H1 (cell line): ENCODE measurements at regions of chr5 and their contacts with region 1.

Region 1: DNA sequence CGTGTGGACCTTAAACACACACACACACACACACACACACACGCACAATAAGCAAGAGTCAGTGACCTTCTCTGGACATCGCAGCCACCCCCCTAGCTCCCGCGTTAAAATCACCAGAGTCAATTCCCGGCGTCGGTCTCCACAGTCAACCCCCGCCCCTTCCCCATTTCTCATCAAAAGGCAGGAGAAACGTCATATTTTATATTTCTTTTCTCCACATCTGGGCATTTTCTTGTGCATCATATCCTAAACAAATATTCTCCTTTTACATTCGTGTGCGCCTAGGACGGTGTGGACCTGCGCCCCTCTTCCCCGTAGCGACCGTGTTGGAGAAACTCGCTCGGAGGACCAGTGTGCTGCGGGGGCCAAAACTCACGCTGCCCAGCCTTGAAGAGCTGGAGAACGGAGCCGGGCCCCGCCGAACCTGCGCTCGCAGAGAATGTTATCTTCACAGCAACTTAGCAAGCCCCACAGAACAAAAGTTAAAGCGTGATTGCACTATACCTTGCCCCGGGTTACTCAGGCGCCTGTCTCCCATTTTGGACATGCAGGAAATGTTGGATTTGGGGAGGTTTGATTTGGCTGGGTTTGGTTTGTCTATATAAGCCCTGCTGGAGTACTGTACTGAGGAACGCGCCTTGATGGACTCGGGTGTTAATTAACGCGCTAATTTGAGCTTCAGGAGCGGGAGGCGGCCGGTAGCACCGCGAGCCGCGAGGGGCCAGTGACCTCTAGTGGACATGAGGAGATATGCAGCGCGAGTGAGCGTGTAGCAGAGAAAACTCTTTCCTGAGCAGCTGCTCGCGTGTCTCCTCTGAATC is 192.4 kb downstream of the MEF2C start:
- DNase-seq: peak in 1 of 2 experiments; percentile 85
- H3K4me3 ChIP-seq: peak overlapping the region in 3 of 4 experiments; percentile 5 to 54 (median 7); a peak in 4 of 8 replicates
- H3K27ac ChIP-seq: no peak overlapping the region
- H3K4me1 ChIP-seq: peaks cover 30 to 36% (median 34%) of the 10 kb centered on the region in 4 experiments
- H3K27me3 ChIP-seq: peaks cover 91 to 100% (median 98%) of the 10 kb centered on the region in 4 experiments
- CTCF ChIP-seq: peak; percentile 79 to 95 (median 95)
- EP300 ChIP-seq: no peak
- POLR2A ChIP-seq: no peak
- RAD21 ChIP-seq: peak; percentile 95

Region 2: GRCh38 chr5:87780831-87781760 is 909.5 kb before region 1 on chr5:
- CTCF ChIA-PET with region 1: interaction called, 50 read pairs
- POLR2A ChIA-PET with region 1: no interaction called
- DNase-seq: peak; percentile 57 to 77
- H3K4me3 ChIP-seq: peak overlapping the region in 1 of 4 experiments; percentile 47; a peak in 3 of 8 replicates
- H3K27ac ChIP-seq: no peak overlapping the region
- H3K4me1 ChIP-seq: no peaks in the 10 kb centered on the region; a peak in 1 of 7 replicates
- H3K27me3 ChIP-seq: peaks cover 2 to 9% (median 4%) of the 10 kb centered on the region in 4 experiments; a peak in 4 of 7 replicates
- CTCF ChIP-seq: peak; percentile 74 to 88 (median 86)
- EP300 ChIP-seq: no peak
- POLR2A ChIP-seq: no peak
- RAD21 ChIP-seq: peak; percentile 99

Region 3: DNA sequence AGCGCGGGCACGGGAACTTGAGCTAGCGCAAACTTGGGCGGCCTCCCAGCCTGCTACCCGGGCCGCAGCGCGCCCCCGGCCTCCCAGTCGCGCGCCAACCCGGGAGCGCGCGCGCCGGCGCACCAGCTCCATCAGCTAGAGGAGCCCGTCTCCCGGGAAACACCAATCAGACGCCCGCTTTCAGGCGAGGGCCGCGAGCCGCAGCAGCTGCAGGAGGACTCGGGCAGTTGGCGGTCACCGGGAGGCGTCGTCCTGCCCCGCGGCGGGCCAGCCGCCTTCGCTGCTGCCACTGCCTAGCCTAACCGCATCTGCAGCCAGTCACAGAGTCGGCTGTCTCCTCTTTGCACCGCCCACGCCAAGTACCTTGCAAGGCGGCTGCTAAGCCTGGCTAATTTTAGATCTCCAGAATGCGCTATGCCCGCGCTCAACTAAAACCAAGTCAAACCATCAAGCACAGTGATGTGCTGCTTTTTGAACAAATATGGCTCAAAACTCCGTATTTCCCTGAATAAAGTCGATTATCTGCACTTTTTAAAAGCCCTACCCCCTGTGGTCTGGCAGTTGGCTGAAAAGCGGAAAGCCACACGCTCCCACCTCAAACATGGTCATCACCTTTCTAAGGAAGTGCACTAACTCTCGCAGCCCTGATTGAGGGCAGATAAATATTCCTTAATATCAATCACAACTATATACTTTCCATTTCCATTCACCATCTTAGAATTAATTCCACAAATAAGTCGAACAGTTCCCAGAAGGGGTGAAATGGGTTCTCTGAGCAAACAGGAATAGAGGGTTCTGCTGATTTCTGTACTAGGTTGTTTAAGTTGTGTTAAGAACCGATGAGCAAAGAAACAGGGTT is 29.4 kb before region 1 on chr5:
- CTCF ChIA-PET with region 1: interaction called, 24 read pairs
- POLR2A ChIA-PET with region 1: interaction called, 7 read pairs
- DNase-seq: peak in 1 of 2 experiments; percentile 92
- H3K4me3 ChIP-seq: peak overlapping the region; percentile 29 to 60 (median 34); a peak in 7 of 8 replicates
- H3K27ac ChIP-seq: no peak overlapping the region
- H3K4me1 ChIP-seq: peaks cover 10 to 26% (median 13%) of the 10 kb centered on the region in 4 experiments; a peak in 6 of 7 replicates
- H3K27me3 ChIP-seq: peaks cover 25 to 80% (median 47%) of the 10 kb centered on the region in 4 experiments
- CTCF ChIP-seq: no peak
- EP300 ChIP-seq: no peak
- POLR2A ChIP-seq: no peak
- RAD21 ChIP-seq: no peak; a peak in 2 of 4 replicates

Region 4: GRCh38 chr5:88673253-88674105 is 17.1 kb before region 1 on chr5:
- CTCF ChIA-PET with region 1: interaction called, 63 read pairs
- POLR2A ChIA-PET with region 1: interaction called, 5 read pairs
- DNase-seq: no peak
- H3K4me3 ChIP-seq: peak overlapping the region; percentile 6 to 64 (median 20); a peak in 4 of 8 replicates
- H3K27ac ChIP-seq: no peak overlapping the region
- H3K4me1 ChIP-seq: peaks cover 10 to 32% (median 19%) of the 10 kb centered on the region in 4 experiments
- H3K27me3 ChIP-seq: peaks cover 51 to 87% (median 68%) of the 10 kb centered on the region in 4 experiments
- CTCF ChIP-seq: no peak
- EP300 ChIP-seq: no peak
- POLR2A ChIP-seq: no peak
- RAD21 ChIP-seq: no peak

Region 5: DNA sequence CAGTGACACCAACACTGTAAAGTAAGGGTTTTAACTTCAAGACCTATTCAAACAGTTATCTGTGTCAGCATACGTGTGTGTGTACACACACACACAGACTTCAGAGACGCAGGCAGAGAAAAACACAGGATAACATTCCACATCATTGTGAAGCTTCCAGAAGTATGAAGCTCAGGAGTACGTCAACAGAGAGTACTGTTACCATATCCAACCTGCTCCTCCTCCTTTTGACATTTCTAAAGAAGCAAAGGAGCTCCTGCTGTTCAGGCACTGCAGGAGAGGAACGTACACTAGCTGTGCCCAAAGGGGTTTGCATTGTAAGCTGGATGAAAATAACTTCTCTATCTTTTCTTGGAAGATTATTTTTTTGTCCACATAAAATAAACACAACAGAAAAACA is 11.7 kb after region 1 on chr5:
- CTCF ChIA-PET with region 1: interaction called, 11 read pairs
- POLR2A ChIA-PET with region 1: interaction called, 4 read pairs
- DNase-seq: no peak
- H3K4me3 ChIP-seq: peak overlapping the region in 1 of 4 experiments; percentile 9; a peak in 1 of 8 replicates
- H3K27ac ChIP-seq: no peak overlapping the region
- H3K4me1 ChIP-seq: peaks cover 0 to 7% (median 2%) of the 10 kb centered on the region in 4 experiments; a peak in 5 of 7 replicates
- H3K27me3 ChIP-seq: no peaks in the 10 kb centered on the region
- CTCF ChIP-seq: no peak
- EP300 ChIP-seq: no peak
- POLR2A ChIP-seq: no peak
- RAD21 ChIP-seq: no peak

Region 6: GRCh38 chr5:88899096-88899737 is 208.6 kb after region 1 on chr5:
- CTCF ChIA-PET with region 1: no interaction called
- POLR2A ChIA-PET with region 1: no interaction called
- DNase-seq: no peak
- H3K4me3 ChIP-seq: no peak overlapping the region
- H3K27ac ChIP-seq: no peak overlapping the region
- H3K4me1 ChIP-seq: peaks cover 0 to 8% (median 2%) of the 10 kb centered on the region in 4 experiments; a peak in 3 of 7 replicates
- H3K27me3 ChIP-seq: no peaks in the 10 kb centered on the region
- CTCF ChIP-seq: no peak
- EP300 ChIP-seq: no peak
- POLR2A ChIP-seq: no peak
- RAD21 ChIP-seq: no peak